ENCODE measurements at regions of chr17 and their contacts with region 1.

Region 1: DNA sequence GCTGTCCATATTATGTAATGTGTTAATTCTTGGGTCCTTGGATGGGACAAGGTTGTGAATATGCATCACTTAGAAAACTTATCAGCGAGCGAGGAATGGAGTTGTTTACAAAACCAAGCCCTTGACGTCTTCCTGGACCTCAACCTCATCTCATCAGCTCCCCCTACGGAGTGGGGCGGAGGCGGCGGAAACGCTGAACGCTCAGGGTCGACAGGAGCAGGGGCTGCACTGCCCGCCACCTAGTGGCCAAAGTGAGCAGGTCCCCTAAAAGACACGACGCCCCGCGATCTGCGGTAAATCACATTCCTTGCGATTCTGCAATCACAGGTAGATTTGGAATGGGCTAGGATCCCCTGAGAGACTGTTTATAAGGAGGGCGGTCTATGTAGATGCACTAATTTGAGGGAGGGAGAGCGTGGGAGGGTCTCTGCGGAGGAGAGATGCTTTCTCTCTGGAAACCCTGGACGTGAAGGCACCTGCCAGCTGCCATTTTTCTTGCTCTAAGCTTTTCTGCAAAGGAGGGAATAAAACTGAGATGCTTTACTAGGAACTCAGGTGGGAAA is 5.4 kb upstream of the ICAM2 start:
- DNase-seq: peak; percentile 87
- H3K4me3 ChIP-seq: peak overlapping the region in 2 of 4 donors; percentile 12 to 17
- H3K27ac ChIP-seq: peak overlapping the region in 1 of 4 donors; percentile 29
- H3K4me1 ChIP-seq: peaks cover 0 to 10% (median 3%) of the 10 kb centered on the region in 4 donors
- H3K27me3 ChIP-seq: no peaks in the 10 kb centered on the region
- CTCF ChIP-seq: peak; percentile 91 to 95 (median 94)
- EP300 ChIP-seq: no peak
- POLR2A ChIP-seq: no peak

Region 2: DNA sequence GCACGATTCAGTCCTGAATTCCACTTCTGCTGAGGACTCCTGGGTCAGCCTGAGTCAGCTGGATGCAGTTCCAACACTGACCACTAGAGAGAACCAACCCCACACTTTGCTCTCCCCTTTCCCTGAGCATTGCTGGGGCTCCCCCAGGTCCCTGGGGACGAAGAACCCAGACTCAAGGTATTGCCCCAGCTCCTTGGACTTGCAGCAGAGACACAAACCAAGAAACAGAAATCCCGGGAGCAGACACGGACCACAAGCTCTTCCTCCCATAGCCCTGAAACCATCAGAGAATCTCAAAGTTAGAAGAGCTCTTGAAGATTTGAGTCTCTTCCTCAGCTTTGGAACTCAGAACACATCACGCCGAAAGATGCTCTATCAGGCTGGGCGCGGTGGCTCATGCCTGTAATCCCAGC is 106.5 kb before region 1 on chr17:
- in situ Hi-C with region 1: loop called in 3 of 4 experiments (anchors 10 to 25 kb)
- intact Hi-C with region 1: loop called (anchors 10 kb)
- DNase-seq: peak; percentile 69
- H3K4me3 ChIP-seq: no peak overlapping the region
- H3K27ac ChIP-seq: no peak overlapping the region
- H3K4me1 ChIP-seq: no peaks in the 10 kb centered on the region
- H3K27me3 ChIP-seq: no peaks in the 10 kb centered on the region
- CTCF ChIP-seq: peak; percentile 94 to 98 (median 95)
- EP300 ChIP-seq: no peak
- POLR2A ChIP-seq: no peak

Region 3: GRCh38 chr17:63929860-63930766 is 95.7 kb before region 1 on chr17:
- in situ Hi-C with region 1: loop called in 1 of 4 experiments (anchors 10 kb)
- intact Hi-C with region 1: loop called (anchors 10 kb)
- DNase-seq: no peak
- H3K4me3 ChIP-seq: no peak overlapping the region
- H3K27ac ChIP-seq: peak overlapping the region in 1 of 4 donors; percentile 37
- H3K4me1 ChIP-seq: peaks cover 0 to 14% (median 3%) of the 10 kb centered on the region in 4 donors
- H3K27me3 ChIP-seq: no peaks in the 10 kb centered on the region
- CTCF ChIP-seq: no peak
- EP300 ChIP-seq: no peak
- POLR2A ChIP-seq: no peak

Region 4: GRCh38 chr17:64103391-64104364 is 77.9 kb after region 1 on chr17:
- in situ Hi-C with region 1: no loop called
- intact Hi-C with region 1: no loop called
- DNase-seq: no peak
- H3K4me3 ChIP-seq: no peak overlapping the region
- H3K27ac ChIP-seq: peak overlapping the region in 1 of 4 donors; percentile 23
- H3K4me1 ChIP-seq: peaks cover 7 to 35% (median 16%) of the 10 kb centered on the region in 4 donors
- H3K27me3 ChIP-seq: no peaks in the 10 kb centered on the region
- CTCF ChIP-seq: no peak
- EP300 ChIP-seq: no peak
- POLR2A ChIP-seq: no peak

Region 5: GRCh38 chr17:64160378-64160777 is 134.6 kb after region 1 on chr17:
- in situ Hi-C with region 1: no loop called
- intact Hi-C with region 1: no loop called
- DNase-seq: no peak
- H3K4me3 ChIP-seq: no peak overlapping the region
- H3K27ac ChIP-seq: no peak overlapping the region
- H3K4me1 ChIP-seq: peaks cover 7 to 14% (median 11%) of the 10 kb centered on the region in 4 donors
- H3K27me3 ChIP-seq: no peaks in the 10 kb centered on the region
- CTCF ChIP-seq: no peak
- EP300 ChIP-seq: no peak
- POLR2A ChIP-seq: no peak

Measured in transverse colon (tissue), 4 donors.